KBM-7 (cell line): ENCODE measurements at regions of chr5 and their contacts with region 1.

Region 1: DNA sequence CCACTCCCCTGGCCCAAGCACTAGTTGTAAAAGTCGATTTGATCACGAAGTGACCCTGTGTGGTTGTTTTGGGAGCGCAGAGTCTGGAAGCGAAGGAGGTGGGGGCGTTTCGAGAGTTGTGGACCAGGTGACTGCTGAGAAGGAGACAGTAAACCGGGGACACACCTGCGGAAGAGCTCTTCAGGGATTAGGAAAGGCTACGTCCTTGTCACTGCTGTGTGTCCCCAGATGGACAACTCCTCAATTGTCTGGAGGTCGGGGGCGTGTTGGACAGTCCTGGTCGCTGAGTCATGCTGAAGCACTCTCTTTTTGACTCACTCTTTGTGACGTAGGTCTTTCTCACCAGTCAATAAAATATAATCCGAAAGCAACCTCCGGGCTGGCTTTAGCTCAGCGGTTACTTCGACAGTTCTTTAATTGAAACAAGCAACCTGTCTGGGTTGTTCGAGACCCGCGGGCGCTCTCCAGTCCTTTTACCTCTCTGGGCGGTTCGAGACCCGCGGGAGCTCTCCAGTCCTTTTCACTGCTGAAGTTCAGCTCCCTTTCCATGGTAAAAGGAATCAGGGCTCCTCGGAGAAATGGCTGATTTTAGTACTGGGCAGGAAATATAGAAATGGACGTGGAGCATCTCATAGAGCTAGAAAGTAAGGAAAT is 10.8 kb downstream of the ZMAT2 start:
- DNase-seq: peak; percentile 99

Region 2: GRCh38 chr5:140362860-140363630 is 348.0 kb before region 1 on chr5:
- in situ Hi-C with region 1: loop called (anchors 10 kb)
- DNase-seq: peak; percentile 78

Region 3: GRCh38 chr5:140509898-140510297 is 201.1 kb before region 1 on chr5:
- in situ Hi-C with region 1: no loop called
- DNase-seq: no peak